ENCODE measurements at regions of chr2 and their contacts with region 1.

Region 1: GRCh38 chr2:207166039-207166348 is 246 bp upstream of the KLF7 start:
- DNase-seq: peak; percentile 99
- H3K4me3 Mint-ChIP-seq: peak overlapping the region; percentile 95
- H3K27ac Mint-ChIP-seq: peak overlapping the region; percentile 99
- H3K4me1 Mint-ChIP-seq: peaks cover 49% of the 10 kb centered on the region
- H3K27me3 Mint-ChIP-seq: peaks cover 2% of the 10 kb centered on the region

Region 2: DNA sequence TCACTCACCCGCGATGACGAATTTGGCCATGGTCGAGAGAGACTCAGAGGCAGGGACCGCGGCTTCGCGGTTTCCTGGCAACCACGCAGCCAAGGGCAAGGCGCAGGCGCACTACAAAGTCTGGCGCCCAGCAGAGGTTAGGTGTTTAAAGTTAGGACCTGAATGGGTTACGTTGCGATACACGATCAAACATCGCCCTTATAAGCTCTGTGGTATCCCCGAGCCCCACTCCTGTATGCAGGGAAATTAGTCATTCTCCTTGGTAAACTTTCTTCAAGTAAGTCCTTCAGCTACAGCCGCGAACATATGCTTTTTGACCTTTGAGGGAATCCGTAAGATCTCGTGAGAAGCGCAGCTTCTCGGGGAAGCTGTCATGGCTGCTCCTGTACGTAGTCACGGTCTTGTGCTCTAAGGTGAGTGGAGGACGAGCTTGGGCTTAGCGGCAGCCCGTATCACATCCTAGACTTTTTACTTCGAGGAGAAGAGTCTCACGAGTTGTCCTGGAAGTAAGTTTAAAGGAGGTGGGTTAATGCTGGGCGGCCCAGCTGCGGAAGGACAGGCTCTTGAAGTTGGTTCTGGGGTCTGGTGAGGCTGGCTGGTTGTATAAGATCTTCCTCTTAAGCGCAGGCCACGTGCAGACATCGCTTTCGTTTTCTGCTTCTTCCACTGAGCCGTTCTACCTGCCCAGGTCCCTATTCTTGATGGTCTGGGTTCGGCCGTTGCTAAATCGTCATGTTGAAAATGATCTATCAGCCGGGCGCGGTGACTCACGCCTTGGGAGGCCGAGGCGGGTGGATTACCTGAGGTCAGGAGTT is 400.5 kb before region 1 on chr2 and contains the starts of genes FASTKD2 and MDH1B:
- CTCF ChIA-PET with region 1: no interaction called
- POLR2A ChIA-PET with region 1: interaction called, 4 read pairs
- intact Hi-C with region 1: loop called (anchors 1 kb)
- DNase-seq: peak; percentile 94
- H3K4me3 Mint-ChIP-seq: peak within 1 kb of the TSS; percentile 93
- H3K27ac Mint-ChIP-seq: peak within 1 kb of the TSS; percentile 96
- H3K4me1 Mint-ChIP-seq: peaks cover 31% of the 10 kb centered on the region
- H3K27me3 Mint-ChIP-seq: no peaks in the 10 kb centered on the region
- total RNA-seq, gene FASTKD2: 31.3 to 32.0 TPM
- total RNA-seq, gene MDH1B: 0.74 to 0.87 TPM

Region 3: DNA sequence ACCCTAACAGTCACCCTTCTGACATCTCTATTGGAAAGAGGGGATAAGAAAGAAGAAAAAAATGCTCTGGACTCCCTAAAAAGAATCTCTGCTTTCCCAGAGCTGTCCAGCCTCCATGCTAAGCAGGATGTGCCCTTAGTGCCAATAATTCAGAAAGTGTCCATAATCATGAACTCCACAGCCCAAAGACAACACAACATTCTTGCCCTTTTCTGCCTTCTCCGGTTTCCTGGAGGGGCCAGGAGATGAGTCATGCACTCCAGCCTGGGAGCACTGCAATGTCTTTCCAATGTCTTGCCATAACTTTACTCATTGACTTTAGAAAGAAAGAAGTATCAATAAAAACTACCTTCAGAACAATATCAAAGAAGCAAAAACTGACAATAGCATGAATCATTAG is 44.2 kb before region 1 on chr2:
- CTCF ChIA-PET with region 1: interaction called, 3 read pairs
- POLR2A ChIA-PET with region 1: interaction called, 4 read pairs
- intact Hi-C with region 1: loop called (anchors 1 kb)
- DNase-seq: no peak
- H3K4me3 Mint-ChIP-seq: no peak overlapping the region
- H3K27ac Mint-ChIP-seq: peak overlapping the region; percentile 55
- H3K4me1 Mint-ChIP-seq: peaks cover 61% of the 10 kb centered on the region
- H3K27me3 Mint-ChIP-seq: no peaks in the 10 kb centered on the region

Region 4: DNA sequence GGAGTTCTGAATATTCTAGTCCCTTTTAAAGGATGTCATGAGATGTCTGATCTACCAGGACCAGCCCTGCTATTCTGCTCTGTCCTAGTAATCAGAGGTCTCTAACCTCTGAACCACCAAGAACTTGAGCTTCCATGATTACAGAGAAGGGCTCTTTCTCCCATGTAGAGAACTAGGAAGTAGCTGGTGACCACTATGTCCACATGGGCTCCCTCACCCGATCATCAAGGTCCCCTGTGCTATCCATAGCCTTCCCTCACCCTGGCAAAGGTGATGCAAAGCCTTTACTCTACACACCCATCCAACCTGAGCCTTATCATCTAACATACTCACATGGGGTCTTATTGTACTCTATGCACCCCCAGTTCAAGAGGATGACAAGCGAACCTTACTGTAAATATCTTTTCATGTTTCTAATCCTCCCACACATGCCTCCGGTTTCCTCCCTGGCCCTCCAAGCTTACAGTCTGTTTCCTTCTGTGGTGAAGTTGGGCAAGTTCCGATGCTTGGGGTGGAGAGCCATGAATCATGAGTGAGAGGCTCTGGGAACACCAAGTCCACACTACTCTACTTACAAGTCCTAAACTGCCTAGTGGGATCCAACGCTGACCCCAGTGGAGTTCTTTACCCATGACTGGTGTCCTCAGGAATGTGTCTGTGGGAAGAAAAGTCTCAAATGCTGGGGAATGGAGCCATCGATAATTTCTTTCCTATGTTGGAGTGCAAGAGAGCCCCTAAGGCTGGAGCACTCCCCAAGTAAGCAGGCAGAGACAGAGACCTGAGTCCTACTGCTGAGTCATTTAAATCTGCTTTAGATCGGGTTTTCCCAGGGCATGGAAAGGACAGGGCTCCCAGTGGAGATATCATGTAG is 73.1 kb after region 1 on chr2:
- CTCF ChIA-PET with region 1: interaction called, 3 read pairs
- POLR2A ChIA-PET with region 1: interaction called, 11 read pairs
- intact Hi-C with region 1: loop called (anchors 1 kb)
- DNase-seq: peak; percentile 69
- H3K4me3 Mint-ChIP-seq: no peak overlapping the region
- H3K27ac Mint-ChIP-seq: no peak overlapping the region
- H3K4me1 Mint-ChIP-seq: peaks cover 25% of the 10 kb centered on the region
- H3K27me3 Mint-ChIP-seq: peaks cover 1% of the 10 kb centered on the region

Region 5: GRCh38 chr2:207258263-207258991 is 92.4 kb after region 1 on chr2:
- CTCF ChIA-PET with region 1: no interaction called
- POLR2A ChIA-PET with region 1: no interaction called
- intact Hi-C with region 1: no loop called
- DNase-seq: no peak
- H3K4me3 Mint-ChIP-seq: no peak overlapping the region
- H3K27ac Mint-ChIP-seq: no peak overlapping the region
- H3K4me1 Mint-ChIP-seq: peaks cover 27% of the 10 kb centered on the region
- H3K27me3 Mint-ChIP-seq: peaks cover 5% of the 10 kb centered on the region

Region 6: GRCh38 chr2:207311316-207312005 is 145.5 kb after region 1 on chr2:
- CTCF ChIA-PET with region 1: interaction called, 4 read pairs
- POLR2A ChIA-PET with region 1: no interaction called
- intact Hi-C with region 1: loop called (anchors 1 kb)
- DNase-seq: peak; percentile 76
- H3K4me3 Mint-ChIP-seq: peak overlapping the region; percentile 3
- H3K27ac Mint-ChIP-seq: peak overlapping the region; percentile 79
- H3K4me1 Mint-ChIP-seq: peaks cover 28% of the 10 kb centered on the region
- H3K27me3 Mint-ChIP-seq: no peaks in the 10 kb centered on the region

Region 7: DNA sequence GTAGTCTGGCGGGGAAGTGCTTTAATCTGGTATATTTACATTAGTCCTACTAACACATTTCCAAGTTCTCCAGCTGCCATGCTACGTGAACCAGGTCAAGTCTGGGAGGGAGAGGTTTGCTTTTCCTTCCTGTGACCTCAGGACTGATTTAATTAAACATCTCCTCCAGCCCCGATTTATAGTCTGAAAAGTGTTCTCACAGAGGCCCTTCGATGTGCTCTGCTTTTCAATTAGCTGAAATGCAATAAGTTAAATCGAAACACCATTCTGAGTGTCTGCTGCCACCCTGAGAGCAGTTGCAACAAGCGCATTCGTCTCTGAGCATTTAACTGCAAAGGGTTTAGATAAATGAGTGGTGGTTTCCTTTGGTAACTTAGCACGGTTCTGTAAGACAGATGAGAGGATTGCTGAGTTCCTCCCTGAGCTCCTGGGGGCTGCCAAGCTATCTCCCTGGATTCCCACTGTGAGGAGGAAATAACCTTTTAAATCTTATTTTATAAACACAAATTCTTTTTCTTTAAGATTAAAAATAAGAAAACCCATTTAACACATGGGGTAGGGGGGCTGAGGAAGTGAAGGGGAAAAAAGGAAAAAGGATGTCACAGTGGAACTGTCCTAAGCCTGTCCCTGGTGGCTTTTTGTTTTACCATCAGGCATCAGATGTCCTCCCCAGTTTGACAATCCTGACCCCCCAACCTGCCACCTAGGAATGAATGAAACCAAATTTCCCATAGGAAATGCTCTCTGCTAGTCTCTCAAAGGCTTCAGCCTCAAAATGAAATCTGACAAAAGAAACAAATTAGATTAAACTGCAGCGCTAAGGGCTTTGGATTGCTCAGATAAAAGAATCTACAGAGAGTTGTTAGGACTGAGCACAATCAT is 307.3 kb after region 1 on chr2:
- CTCF ChIA-PET with region 1: interaction called, 18 read pairs
- POLR2A ChIA-PET with region 1: interaction called, 3 read pairs
- intact Hi-C with region 1: loop called (anchors 1 kb)
- DNase-seq: peak; percentile 71
- H3K4me3 Mint-ChIP-seq: no peak overlapping the region
- H3K27ac Mint-ChIP-seq: peak overlapping the region; percentile 32
- H3K4me1 Mint-ChIP-seq: peaks cover 22% of the 10 kb centered on the region
- H3K27me3 Mint-ChIP-seq: no peaks in the 10 kb centered on the region

Region 8: DNA sequence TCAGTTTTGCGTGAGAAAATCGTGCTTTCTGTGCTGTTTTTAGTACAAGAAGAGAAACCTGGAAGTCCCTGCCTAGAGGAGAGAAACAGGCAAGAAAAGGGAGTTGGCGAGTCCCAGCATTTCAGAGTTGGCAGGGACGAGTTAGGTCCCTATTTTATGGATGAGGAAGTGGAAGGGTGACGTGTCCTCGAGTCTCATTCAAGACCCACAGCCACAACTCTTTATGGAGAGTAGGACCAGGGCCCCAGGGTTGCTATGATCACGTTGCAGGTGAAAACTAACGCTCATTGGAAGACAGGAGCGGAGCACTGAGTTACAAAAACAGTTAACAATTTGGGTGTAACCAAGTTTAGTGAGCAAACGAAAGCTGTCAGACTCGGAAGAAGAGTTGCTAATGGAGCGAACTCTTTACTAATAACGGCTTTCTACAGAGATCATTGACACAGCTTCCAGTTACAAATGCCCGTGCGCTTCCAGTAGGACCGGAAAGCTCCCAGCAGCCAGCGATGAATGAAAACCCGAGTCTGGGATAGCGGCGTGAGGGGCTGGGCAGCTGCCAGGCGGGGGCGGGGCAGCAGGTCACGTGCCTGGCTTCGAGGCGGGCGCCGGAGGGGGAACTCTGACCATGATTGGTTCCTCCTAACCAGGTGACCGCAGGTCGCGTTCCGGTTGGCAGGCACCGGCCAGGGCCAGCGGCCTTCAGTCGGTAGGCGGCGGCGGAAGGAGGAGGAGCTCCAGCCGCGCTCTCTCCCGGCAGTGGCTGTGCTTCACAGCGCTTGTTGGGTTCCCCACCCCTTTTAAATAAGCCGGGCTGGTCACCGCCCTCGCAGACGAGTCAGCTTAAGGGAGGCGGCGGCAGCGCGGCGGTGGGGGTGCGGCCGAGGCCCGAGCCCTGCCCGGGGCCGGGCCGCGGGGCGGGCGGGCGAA is 545.1 kb after region 1 on chr2 and contains the start of gene CCNYL1:
- CTCF ChIA-PET with region 1: no interaction called
- POLR2A ChIA-PET with region 1: no interaction called
- intact Hi-C with region 1: loop called (anchors 5 kb)
- DNase-seq: peak; percentile 99
- H3K4me3 Mint-ChIP-seq: peak within 1 kb of the TSS; percentile 88
- H3K27ac Mint-ChIP-seq: peak within 1 kb of the TSS; percentile 82
- H3K4me1 Mint-ChIP-seq: peaks cover 25% of the 10 kb centered on the region
- H3K27me3 Mint-ChIP-seq: no peaks in the 10 kb centered on the region
- total RNA-seq, gene CCNYL1: 5.7 to 6.4 TPM

Measured in activated CD4-positive, alpha-beta memory T cell treated with anti-CD3 and anti-CD28 coated beads for 36 hours (primary cell).